Activated B cell treated with CpG ODN at 0.5 μM for 24 hours (primary cell): ENCODE measurements at regions of chr3 and their contacts with region 1.

Region 1: DNA sequence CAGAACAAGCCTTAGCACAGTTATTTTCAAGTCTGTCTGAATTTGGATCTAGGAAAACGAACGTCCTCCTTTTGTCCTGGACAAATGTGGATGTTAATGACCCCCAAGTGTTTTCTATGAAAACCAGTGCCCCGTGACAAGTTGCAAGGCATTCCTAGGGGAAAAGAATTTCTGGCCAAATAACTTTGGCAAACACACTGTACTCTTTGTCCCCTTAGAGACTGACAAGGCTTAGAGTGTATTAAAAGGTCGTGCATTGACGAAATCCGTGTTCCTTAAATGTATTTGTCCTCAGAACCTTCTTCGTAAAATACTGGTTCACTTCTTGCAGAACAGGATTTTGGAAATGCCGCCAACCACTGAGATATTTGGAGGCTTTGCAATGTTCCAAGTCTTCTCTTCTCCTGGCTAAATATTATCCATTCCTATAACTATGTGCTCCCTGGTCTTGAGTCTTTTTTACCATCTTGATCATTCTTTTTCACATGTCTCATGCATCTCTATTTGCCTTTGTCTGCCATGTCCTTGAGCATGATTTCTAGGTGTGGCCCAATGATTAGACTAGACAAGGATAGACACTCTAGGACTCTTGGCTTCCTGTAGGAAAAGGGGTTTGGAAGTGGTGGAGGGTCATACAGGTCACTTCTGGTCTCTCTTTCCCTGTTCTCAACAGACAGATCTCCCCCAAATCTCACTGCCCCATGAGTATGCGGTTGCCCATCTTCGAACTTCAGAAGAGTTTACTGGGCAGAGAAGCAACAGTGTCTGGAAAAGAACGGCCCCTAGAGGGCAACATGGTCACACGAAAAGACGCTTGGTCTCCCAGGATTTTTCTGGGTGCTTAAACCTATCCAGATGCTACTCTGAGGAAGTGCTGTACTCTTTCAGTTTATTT is 117.5 kb downstream of the EDEM1 start:
- DNase-seq: no peak
- ATAC-seq: peak; percentile 18
- H3K4me3 Mint-ChIP-seq: no peak overlapping the region
- H3K27ac Mint-ChIP-seq: no peak overlapping the region
- H3K4me1 Mint-ChIP-seq: peaks cover 4% of the 10 kb centered on the region
- H3K27me3 Mint-ChIP-seq: peaks cover 2% of the 10 kb centered on the region
- CTCF ChIP-seq: no peak

Region 2: DNA sequence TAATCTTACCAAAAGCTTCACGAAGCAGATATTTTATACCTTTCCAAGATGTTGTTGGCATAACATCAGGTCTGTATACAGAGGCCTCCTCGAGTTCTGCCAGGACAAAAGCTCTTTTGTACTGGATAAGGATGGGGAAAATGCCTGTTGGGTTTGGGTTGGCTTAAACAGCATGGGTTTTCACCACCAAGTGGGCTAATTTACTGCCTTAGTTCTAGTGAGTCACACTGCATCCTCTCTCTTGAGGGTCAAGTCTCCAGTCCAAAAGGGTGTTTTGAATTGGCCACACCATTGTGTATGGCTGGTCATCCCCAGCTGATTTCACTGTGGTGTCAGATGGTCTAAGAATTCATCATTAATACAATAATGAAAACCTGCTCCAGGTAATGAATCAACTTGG is 351.9 kb before region 1 on chr3:
- CTCF ChIA-PET with region 1: no interaction called
- POLR2A ChIA-PET with region 1: no interaction called
- intact Hi-C with region 1: no loop called
- DNase-seq: no peak
- ATAC-seq: no peak
- H3K4me3 Mint-ChIP-seq: no peak overlapping the region
- H3K27ac Mint-ChIP-seq: no peak overlapping the region
- H3K4me1 Mint-ChIP-seq: no peaks in the 10 kb centered on the region
- H3K27me3 Mint-ChIP-seq: no peaks in the 10 kb centered on the region
- CTCF ChIP-seq: no peak

Region 3: DNA sequence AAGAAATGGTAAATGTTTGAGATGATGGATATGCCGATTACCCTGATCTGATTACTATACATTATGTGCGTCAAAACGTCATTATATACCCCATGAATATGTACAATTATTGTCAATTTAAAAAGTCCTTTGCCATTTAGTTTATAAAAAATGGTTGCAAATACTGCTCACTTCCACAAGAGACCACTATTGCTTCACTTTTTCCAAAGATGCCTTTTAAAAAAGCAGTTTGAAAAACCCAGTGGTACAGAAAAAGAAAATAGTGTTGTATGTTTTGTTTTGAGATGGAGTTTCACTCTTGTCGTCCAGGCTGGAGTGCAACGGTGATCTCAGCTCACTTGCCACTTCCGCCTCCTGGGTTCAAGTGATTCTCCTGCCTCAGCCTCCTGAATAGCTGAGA is 78.3 kb before region 1 on chr3:
- CTCF ChIA-PET with region 1: no interaction called
- POLR2A ChIA-PET with region 1: no interaction called
- intact Hi-C with region 1: loop called (anchors 2 kb)
- DNase-seq: no peak
- ATAC-seq: no peak
- H3K4me3 Mint-ChIP-seq: no peak overlapping the region
- H3K27ac Mint-ChIP-seq: no peak overlapping the region
- H3K4me1 Mint-ChIP-seq: peaks cover 7% of the 10 kb centered on the region
- H3K27me3 Mint-ChIP-seq: no peaks in the 10 kb centered on the region
- CTCF ChIP-seq: no peak

Region 4: GRCh38 chr3:5731094-5731493 is 426.1 kb after region 1 on chr3:
- CTCF ChIA-PET with region 1: no interaction called
- POLR2A ChIA-PET with region 1: no interaction called
- intact Hi-C with region 1: loop called (anchors 10 kb)
- DNase-seq: no peak
- ATAC-seq: no peak
- H3K4me3 Mint-ChIP-seq: no peak overlapping the region
- H3K27ac Mint-ChIP-seq: no peak overlapping the region
- H3K4me1 Mint-ChIP-seq: no peaks in the 10 kb centered on the region
- H3K27me3 Mint-ChIP-seq: no peaks in the 10 kb centered on the region
- CTCF ChIP-seq: no peak